Endothelial cell of umbilical vein (primary cell): ENCODE measurements at regions of chr2 and their contacts with region 1.

Region 1: GRCh38 chr2:159921752-159922404 is 123.9 kb upstream of the CD302 start:
- DNase-seq: peak; percentile 77
- H3K4me3 ChIP-seq: no peak overlapping the region
- H3K27ac ChIP-seq: no peak overlapping the region
- H3K4me1 ChIP-seq: no peaks in the 10 kb centered on the region
- H3K27me3 ChIP-seq: no peaks in the 10 kb centered on the region
- CTCF ChIP-seq: peak; percentile 89 to 97
- POLR2A ChIP-seq: no peak

Region 2: GRCh38 chr2:159797543-159798375 is 124.1 kb before region 1 on chr2 and contains the start of gene CD302:
- CTCF ChIA-PET with region 1: interaction called, 4 read pairs
- POLR2A ChIA-PET with region 1: no interaction called
- dilution Hi-C with region 1: no loop called
- intact Hi-C with region 1: loop called (anchors 5 kb)
- DNase-seq: peak; percentile 75
- H3K4me3 ChIP-seq: peak within 1 kb of the TSS; percentile 51 to 84 (median 77)
- H3K27ac ChIP-seq: peak within 1 kb of the TSS; percentile 48
- H3K4me1 ChIP-seq: peaks cover 33% of the 10 kb centered on the region
- H3K27me3 ChIP-seq: no peaks in the 10 kb centered on the region
- CTCF ChIP-seq: no peak
- POLR2A ChIP-seq: peak; percentile 72
- total RNA-seq, gene CD302: 10.6 and 11.5 TPM in 2 replicates

Region 3: GRCh38 chr2:159807183-159808031 is 114.5 kb before region 1 on chr2:
- CTCF ChIA-PET with region 1: interaction called, 14 read pairs
- POLR2A ChIA-PET with region 1: no interaction called
- dilution Hi-C with region 1: no loop called
- intact Hi-C with region 1: no loop called
- DNase-seq: peak; percentile 69
- H3K4me3 ChIP-seq: no peak overlapping the region
- H3K27ac ChIP-seq: no peak overlapping the region
- H3K4me1 ChIP-seq: no peaks in the 10 kb centered on the region
- H3K27me3 ChIP-seq: no peaks in the 10 kb centered on the region
- CTCF ChIP-seq: peak; percentile 62 to 67
- POLR2A ChIP-seq: no peak

Region 4: DNA sequence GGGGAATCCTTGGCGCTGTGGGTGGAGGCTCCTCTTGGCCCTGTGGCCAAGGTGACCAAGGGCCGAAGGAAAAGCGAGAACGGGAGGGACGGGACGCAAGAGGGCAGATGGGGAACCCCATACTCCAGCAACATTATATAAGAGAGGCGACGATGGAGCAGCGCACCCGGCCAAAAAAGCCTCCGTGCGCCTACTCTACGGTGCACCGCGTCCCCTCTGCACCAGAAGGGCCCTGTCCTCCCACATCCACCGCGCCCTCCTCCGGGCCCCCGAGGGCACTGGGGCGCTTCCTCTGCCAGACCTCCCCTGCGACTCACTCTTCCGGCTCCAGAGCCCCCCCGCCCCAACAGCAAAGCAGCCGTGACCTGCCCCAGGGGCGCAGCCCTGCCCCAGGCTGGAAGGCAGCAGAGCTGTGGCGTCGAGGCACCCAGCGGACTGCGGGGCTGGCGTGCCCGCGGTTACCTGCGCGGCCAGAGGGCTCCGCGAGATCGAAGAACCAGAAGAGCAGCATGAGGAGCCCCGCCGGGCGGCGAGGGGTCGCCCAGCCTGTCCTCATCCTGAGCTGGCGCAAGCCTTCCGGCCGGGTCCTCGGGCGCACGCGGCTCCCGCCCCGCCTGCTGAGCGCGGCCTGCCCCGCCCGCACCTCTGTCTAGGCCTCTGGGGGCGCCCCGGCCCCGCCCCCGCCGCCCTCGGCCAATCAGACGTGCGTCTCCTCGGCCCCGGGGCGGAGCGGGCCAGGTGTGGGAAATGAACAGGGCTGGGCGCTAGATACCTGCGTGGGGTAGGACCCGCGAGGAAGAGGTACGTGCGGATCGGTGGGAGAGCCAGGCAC is 17.5 kb before region 1 on chr2:
- CTCF ChIA-PET with region 1: interaction called, 18 read pairs
- POLR2A ChIA-PET with region 1: no interaction called
- dilution Hi-C with region 1: no loop called
- intact Hi-C with region 1: no loop called
- DNase-seq: peak; percentile 22
- H3K4me3 ChIP-seq: peak within 1 kb of the TSS; percentile 53 to 71 (median 58)
- H3K27ac ChIP-seq: peak within 1 kb of the TSS; percentile 68
- H3K4me1 ChIP-seq: peaks cover 22% of the 10 kb centered on the region
- H3K27me3 ChIP-seq: no peaks in the 10 kb centered on the region
- CTCF ChIP-seq: no peak
- POLR2A ChIP-seq: no peak

Region 5: DNA sequence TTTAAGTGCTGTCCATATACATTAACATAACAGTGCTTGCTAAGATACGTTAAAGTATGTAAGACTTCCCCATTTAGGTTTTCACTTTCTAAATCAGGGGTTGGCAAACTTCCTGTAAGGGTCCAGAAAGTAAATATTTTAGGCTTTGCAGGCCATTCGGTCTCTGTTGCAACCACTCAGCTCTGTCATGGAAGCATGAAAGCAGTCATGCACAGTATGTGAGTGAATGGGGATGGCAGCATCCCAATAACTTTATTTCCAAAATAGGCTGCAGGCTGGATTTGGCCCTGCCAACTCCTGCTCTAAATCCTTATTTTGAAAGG is 11.8 kb after region 1 on chr2:
- CTCF ChIA-PET with region 1: interaction called, 20 read pairs
- POLR2A ChIA-PET with region 1: no interaction called
- dilution Hi-C with region 1: no loop called
- intact Hi-C with region 1: no loop called
- DNase-seq: no peak
- H3K4me3 ChIP-seq: no peak overlapping the region
- H3K27ac ChIP-seq: no peak overlapping the region
- H3K4me1 ChIP-seq: no peaks in the 10 kb centered on the region
- H3K27me3 ChIP-seq: no peaks in the 10 kb centered on the region
- CTCF ChIP-seq: no peak
- POLR2A ChIP-seq: no peak

Region 6: GRCh38 chr2:159939946-159940345 is 18.1 kb after region 1 on chr2:
- CTCF ChIA-PET with region 1: interaction called, 19 read pairs
- POLR2A ChIA-PET with region 1: no interaction called
- dilution Hi-C with region 1: no loop called
- intact Hi-C with region 1: no loop called
- DNase-seq: peak; percentile 59
- H3K4me3 ChIP-seq: no peak overlapping the region
- H3K27ac ChIP-seq: no peak overlapping the region
- H3K4me1 ChIP-seq: peaks cover 17% of the 10 kb centered on the region
- H3K27me3 ChIP-seq: no peaks in the 10 kb centered on the region
- CTCF ChIP-seq: peak; percentile 12 to 20
- POLR2A ChIP-seq: no peak